ENCODE measurements at regions of chr4 and their contacts with region 1.

Region 1: DNA sequence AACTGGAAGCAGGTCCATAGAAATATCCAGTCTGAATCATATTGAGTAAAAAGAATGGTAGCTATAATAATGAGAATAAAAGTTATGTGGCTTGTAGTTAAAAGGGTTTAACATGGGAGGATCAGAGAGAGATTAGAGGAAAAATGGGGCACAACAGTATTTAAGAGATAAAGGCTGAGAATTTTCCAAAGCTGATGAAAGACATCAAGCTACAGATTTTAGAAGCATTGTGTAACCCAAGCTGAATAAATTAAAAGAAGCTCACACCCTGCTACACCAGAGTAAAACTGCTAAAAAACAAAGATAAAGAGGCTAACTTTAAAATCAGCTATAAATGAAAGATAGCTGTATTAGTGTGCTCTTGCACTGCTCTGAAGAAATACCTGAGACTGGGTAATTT is 94.2 kb downstream of the AASDH start:
- DNase-seq: no peak
- H3K4me3 ChIP-seq: no peak overlapping the region
- H3K27ac ChIP-seq: no peak overlapping the region
- H3K4me1 ChIP-seq: peaks cover 2% of the 10 kb centered on the region
- H3K27me3 ChIP-seq: no peaks in the 10 kb centered on the region
- CTCF ChIP-seq: no peak
- EP300 ChIP-seq: no peak
- POLR2A ChIP-seq: no peak

Region 2: DNA sequence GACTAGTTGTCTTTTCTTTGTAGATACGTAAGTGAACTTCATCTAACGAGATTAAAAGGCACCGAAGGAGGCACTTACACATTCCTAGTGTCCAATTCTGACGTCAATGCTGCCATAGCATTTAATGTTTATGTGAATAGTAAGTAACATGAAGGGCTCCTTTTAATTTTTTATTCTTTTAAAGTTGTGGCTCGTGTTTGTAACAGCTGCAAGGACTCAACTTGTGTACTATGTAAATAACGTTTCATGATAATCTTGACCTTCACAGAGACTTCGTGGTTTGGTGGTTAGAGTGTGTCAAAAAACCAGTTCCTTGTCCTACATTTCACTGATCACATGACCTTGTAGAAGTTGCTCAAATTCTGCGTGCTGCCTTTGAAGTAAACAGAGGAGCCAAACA is 1583.7 kb before region 1 on chr4:
- intact Hi-C with region 1: no loop called
- DNase-seq: no peak
- H3K4me3 ChIP-seq: no peak overlapping the region
- H3K27ac ChIP-seq: peak overlapping the region in 1 of 2 donors; percentile 1
- H3K4me1 ChIP-seq: peaks cover 9% of the 10 kb centered on the region
- H3K27me3 ChIP-seq: no peaks in the 10 kb centered on the region
- CTCF ChIP-seq: no peak
- EP300 ChIP-seq: no peak
- POLR2A ChIP-seq: no peak

Region 3: GRCh38 chr4:56276547-56276946 is 16.6 kb before region 1 on chr4:
- intact Hi-C with region 1: loop called in 1 of 4 experiments (anchors 1 kb)
- DNase-seq: no peak
- H3K4me3 ChIP-seq: no peak overlapping the region
- H3K27ac ChIP-seq: no peak overlapping the region
- H3K4me1 ChIP-seq: no peaks in the 10 kb centered on the region
- H3K27me3 ChIP-seq: no peaks in the 10 kb centered on the region
- CTCF ChIP-seq: no peak
- EP300 ChIP-seq: no peak
- POLR2A ChIP-seq: no peak

Region 4: GRCh38 chr4:56512166-56512565 is 219.0 kb after region 1 on chr4:
- intact Hi-C with region 1: no loop called
- DNase-seq: no peak
- H3K4me3 ChIP-seq: no peak overlapping the region
- H3K27ac ChIP-seq: no peak overlapping the region
- H3K4me1 ChIP-seq: no peaks in the 10 kb centered on the region
- H3K27me3 ChIP-seq: no peaks in the 10 kb centered on the region
- CTCF ChIP-seq: no peak
- EP300 ChIP-seq: no peak
- POLR2A ChIP-seq: no peak

Measured in ovary (tissue), 10 donors.